ENCODE measurements at regions of chr14 and their contacts with region 1.

Region 1: DNA sequence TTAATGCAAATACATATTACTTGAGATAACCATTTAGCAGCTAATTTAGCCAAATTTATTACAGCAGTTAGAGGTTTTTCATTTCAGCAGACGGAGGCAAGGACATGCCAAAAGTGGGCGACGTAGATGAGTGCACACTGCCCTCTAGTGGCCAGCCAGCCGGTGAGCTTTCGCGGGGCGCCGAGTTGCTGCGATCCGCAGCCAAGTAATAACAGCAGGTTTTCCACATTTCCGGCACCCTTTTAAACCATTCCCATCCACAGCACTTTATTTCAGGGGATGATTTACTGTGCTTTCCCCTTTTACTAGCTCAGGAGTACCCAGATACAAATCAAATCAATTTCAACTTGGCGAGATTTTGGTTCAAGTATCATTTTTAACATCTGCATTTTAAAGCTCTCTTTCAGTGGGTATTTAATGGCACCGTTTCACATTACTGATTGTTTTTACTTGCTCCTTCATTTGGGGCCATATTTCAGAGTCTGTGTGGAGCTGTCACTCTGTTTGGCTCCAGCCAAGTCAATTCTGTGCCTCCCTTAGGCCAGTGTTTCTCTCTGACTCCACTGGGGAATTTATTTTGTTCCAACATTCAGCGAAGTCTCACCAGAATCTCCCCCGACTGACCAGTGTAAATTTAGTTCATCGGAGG is 158.0 kb downstream of the EGLN3 start:
- DNase-seq: peak; percentile 43 to 54 (median 44)
- H3K4me3 ChIP-seq: no peak overlapping the region
- H3K4me3 Mint-ChIP-seq: peak overlapping the region in 7 of 8 donors; percentile 55 to 80 (median 71)
- H3K27ac ChIP-seq: no peak overlapping the region
- H3K27ac Mint-ChIP-seq: no peak overlapping the region
- H3K4me1 ChIP-seq: peaks cover 10% of the 10 kb centered on the region
- H3K4me1 Mint-ChIP-seq: peaks cover 10 to 17% (median 14%) of the 10 kb centered on the region in 4 donors
- H3K27me3 ChIP-seq: no peaks in the 10 kb centered on the region
- H3K27me3 Mint-ChIP-seq: peaks cover 9 to 25% of the 10 kb centered on the region in 2 donors

Region 2: DNA sequence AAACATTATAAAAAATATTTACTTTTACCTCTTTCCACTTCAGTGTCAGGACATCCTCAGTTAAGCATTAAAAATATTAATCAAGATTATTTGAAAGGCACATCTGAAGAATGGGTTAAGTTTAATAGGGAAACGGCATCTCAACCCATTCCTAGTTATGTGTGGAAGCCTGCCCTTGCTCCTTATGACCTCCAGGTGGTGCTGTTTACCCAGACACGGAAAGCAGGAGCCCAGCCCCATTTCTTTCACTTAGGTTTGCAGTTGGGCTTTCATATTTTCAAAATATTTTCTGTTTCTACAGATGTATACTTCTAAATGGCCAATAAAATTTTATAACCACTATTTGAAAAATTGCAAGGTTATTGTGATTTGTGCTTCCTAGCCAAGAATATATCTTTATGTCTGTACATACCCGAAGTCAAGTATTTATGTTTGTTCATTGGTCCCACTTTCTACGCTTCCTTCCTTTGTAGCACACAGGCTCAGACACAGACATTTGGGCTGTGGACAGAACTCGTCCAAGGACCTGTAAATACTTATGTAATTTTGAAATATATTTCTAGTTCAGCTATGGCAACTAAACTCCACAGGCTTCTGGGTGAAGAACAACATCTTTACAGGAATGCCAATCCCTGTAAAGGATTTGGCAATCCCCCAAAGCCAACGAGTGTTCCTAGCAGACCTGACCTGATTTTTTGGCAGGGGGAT is 1216.6 kb before region 1 on chr14:
- CTCF ChIA-PET with region 1: interaction called, 17 read pairs
- POLR2A ChIA-PET with region 1: no interaction called
- intact Hi-C with region 1: no loop called
- DNase-seq: peak in 4 of 5 donors; percentile 36 to 46 (median 38)
- H3K4me3 ChIP-seq: no peak overlapping the region
- H3K4me3 Mint-ChIP-seq: no peak overlapping the region
- H3K27ac ChIP-seq: no peak overlapping the region
- H3K27ac Mint-ChIP-seq: no peak overlapping the region
- H3K4me1 ChIP-seq: no peaks in the 10 kb centered on the region
- H3K4me1 Mint-ChIP-seq: no peaks in the 10 kb centered on the region
- H3K27me3 ChIP-seq: no peaks in the 10 kb centered on the region
- H3K27me3 Mint-ChIP-seq: peaks cover 0 to 3% of the 10 kb centered on the region in 2 donors

Region 3: DNA sequence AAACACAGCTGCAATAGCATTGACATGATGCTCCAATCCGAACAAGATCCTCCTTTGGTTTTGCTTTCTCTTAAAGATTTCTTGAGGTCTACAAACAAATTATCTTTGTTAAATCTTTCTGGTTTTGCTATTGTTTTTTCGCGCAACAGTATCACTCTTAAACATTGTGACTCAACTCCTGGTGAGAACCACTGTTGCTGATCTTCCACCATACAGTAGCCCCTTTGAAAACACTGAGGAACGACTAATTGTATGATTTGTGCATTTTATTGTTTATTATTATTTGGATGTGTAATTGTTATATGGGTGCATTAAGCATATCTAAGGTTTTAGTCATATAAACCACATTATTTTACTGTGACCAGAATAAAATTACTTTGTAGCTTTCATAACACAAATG is 124.8 kb before region 1 on chr14:
- CTCF ChIA-PET with region 1: no interaction called
- POLR2A ChIA-PET with region 1: no interaction called
- intact Hi-C with region 1: no loop called
- DNase-seq: no peak
- H3K4me3 ChIP-seq: no peak overlapping the region
- H3K4me3 Mint-ChIP-seq: no peak overlapping the region
- H3K27ac ChIP-seq: no peak overlapping the region
- H3K27ac Mint-ChIP-seq: no peak overlapping the region
- H3K4me1 ChIP-seq: no peaks in the 10 kb centered on the region
- H3K4me1 Mint-ChIP-seq: no peaks in the 10 kb centered on the region
- H3K27me3 ChIP-seq: no peaks in the 10 kb centered on the region
- H3K27me3 Mint-ChIP-seq: no peaks in the 10 kb centered on the region

Region 4: DNA sequence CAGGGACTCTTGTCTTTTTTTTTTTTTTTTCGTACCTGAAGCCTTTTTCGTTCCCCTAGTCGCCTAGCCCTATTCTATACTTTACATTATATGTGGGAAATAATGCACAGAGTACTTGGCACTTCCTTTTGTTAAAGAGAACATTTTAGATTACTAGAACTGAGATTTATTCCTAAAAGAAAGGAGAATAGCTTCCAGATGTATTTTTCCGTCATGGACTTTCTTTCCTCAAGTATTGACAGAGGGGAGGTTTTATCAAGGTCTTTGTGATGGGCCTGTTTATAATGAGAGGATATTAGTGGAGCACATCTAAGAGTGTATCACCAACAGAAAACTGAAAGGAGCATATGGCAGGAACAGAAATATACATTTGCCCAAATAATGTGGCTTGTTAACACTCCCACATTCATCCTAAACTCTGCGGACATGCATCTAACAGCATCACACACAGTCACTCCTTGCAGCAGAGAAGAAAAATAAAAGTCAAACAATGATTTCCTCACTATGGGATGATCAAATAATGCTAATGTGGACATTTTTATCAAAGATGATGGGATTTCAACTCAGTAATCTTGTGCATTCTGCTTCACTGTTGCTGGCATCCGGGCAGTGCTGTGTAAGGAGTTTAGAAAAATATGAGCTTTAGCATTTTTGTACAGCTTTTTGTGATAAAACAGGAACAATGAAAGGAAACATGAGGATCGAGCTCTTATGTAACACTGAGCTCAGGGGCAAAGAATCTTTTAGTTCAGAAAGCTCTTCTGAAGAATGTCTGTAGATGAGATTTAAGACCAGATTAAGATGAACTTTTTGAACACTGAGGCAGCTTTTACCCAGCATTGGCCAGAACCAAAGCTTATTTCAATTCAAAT is 25.0 kb before region 1 on chr14:
- CTCF ChIA-PET with region 1: interaction called, 40 read pairs
- POLR2A ChIA-PET with region 1: no interaction called
- intact Hi-C with region 1: no loop called
- DNase-seq: no peak
- H3K4me3 ChIP-seq: no peak overlapping the region
- H3K4me3 Mint-ChIP-seq: no peak overlapping the region
- H3K27ac ChIP-seq: no peak overlapping the region
- H3K27ac Mint-ChIP-seq: no peak overlapping the region
- H3K4me1 ChIP-seq: no peaks in the 10 kb centered on the region
- H3K4me1 Mint-ChIP-seq: no peaks in the 10 kb centered on the region
- H3K27me3 ChIP-seq: no peaks in the 10 kb centered on the region
- H3K27me3 Mint-ChIP-seq: peaks cover 4 to 7% of the 10 kb centered on the region in 2 donors

Region 5: GRCh38 chr14:33777681-33778080 is 15.2 kb before region 1 on chr14:
- CTCF ChIA-PET with region 1: interaction called, 40 read pairs
- POLR2A ChIA-PET with region 1: no interaction called
- intact Hi-C with region 1: no loop called
- DNase-seq: no peak
- H3K4me3 ChIP-seq: no peak overlapping the region
- H3K4me3 Mint-ChIP-seq: no peak overlapping the region
- H3K27ac ChIP-seq: no peak overlapping the region
- H3K27ac Mint-ChIP-seq: no peak overlapping the region
- H3K4me1 ChIP-seq: no peaks in the 10 kb centered on the region
- H3K4me1 Mint-ChIP-seq: no peaks in the 10 kb centered on the region
- H3K27me3 ChIP-seq: no peaks in the 10 kb centered on the region
- H3K27me3 Mint-ChIP-seq: peaks cover 1 to 3% of the 10 kb centered on the region in 2 donors

Region 6: GRCh38 chr14:33805593-33805992 is 12.7 kb after region 1 on chr14:
- CTCF ChIA-PET with region 1: interaction called, 23 read pairs
- POLR2A ChIA-PET with region 1: no interaction called
- intact Hi-C with region 1: no loop called
- DNase-seq: no peak
- H3K4me3 ChIP-seq: no peak overlapping the region
- H3K4me3 Mint-ChIP-seq: no peak overlapping the region
- H3K27ac ChIP-seq: no peak overlapping the region
- H3K27ac Mint-ChIP-seq: no peak overlapping the region
- H3K4me1 ChIP-seq: no peaks in the 10 kb centered on the region
- H3K4me1 Mint-ChIP-seq: peaks cover 2 to 5% (median 4%) of the 10 kb centered on the region in 4 donors
- H3K27me3 ChIP-seq: no peaks in the 10 kb centered on the region
- H3K27me3 Mint-ChIP-seq: peaks cover 14 to 16% of the 10 kb centered on the region in 2 donors

Region 7: GRCh38 chr14:34090057-34090850 is 297.4 kb after region 1 on chr14:
- CTCF ChIA-PET with region 1: no interaction called
- POLR2A ChIA-PET with region 1: no interaction called
- intact Hi-C with region 1: no loop called
- DNase-seq: no peak
- H3K4me3 ChIP-seq: no peak overlapping the region
- H3K4me3 Mint-ChIP-seq: no peak overlapping the region
- H3K27ac ChIP-seq: no peak overlapping the region
- H3K27ac Mint-ChIP-seq: no peak overlapping the region
- H3K4me1 ChIP-seq: peaks cover 6% of the 10 kb centered on the region
- H3K4me1 Mint-ChIP-seq: peaks cover 7 to 14% (median 11%) of the 10 kb centered on the region in 4 donors
- H3K27me3 ChIP-seq: no peaks in the 10 kb centered on the region
- H3K27me3 Mint-ChIP-seq: no peaks in the 10 kb centered on the region

Measured in CD4-positive, alpha-beta memory T cell (primary cell).